Transverse colon (tissue), 4 donors: ENCODE measurements at regions of chr12 and their contacts with region 1.

Region 1: DNA sequence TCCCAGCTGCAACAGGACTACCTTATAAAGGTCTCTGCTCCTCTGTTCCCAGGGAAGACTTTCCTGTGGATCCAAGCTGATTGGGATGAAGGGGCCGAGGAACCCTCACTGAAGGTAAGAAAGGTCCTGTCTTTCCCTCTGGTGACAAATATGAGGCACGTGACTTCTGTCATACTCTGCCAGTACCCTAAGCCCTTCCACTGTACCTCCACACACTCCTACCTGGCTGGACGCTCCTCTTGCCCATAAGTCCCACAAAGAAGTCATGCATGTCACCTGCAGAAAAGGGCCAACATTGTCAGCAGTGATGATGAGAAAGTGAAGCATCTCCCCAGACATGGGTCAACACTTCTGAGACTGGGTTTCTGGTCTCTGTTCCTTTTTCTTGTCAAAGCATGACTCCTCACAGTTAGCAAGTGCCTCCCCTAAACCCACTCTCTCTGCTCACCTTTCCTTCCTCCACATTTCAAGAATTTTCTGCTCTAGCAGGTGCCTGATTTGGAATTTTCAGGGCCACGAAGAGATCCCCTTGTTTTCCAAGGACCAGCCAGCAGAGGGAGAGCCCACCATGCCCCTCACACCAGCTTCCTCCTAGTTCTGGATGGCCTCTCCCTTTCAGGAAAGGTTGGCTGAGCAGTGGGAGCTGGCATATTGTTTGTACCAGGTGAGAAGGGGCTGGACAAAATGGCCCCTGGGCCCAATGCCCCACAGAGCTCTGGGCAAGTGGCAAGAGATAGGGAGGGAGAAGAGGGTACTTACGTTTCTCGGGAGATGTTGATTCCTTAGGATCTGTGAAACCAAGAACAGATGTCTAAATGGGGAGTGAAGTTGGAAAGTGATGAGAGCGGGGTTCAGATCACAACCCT is 3.5 kb downstream of the TAC3 start:
- DNase-seq: no peak
- H3K4me3 ChIP-seq: no peak overlapping the region
- H3K27ac ChIP-seq: no peak overlapping the region
- H3K4me1 ChIP-seq: peaks cover 3 to 12% (median 7%) of the 10 kb centered on the region in 4 donors
- H3K27me3 ChIP-seq: no peaks in the 10 kb centered on the region
- CTCF ChIP-seq: no peak
- EP300 ChIP-seq: no peak
- POLR2A ChIP-seq: no peak

Region 2: GRCh38 chr12:57063991-57064685 is 51.3 kb after region 1 on chr12:
- in situ Hi-C with region 1: loop called in 2 of 4 experiments (anchors 10 kb)
- intact Hi-C with region 1: loop called (anchors 2 kb)
- DNase-seq: no peak
- H3K4me3 ChIP-seq: no peak overlapping the region
- H3K27ac ChIP-seq: peak overlapping the region in 2 of 4 donors; percentile 14 to 53
- H3K4me1 ChIP-seq: peaks cover 0 to 4% (median 0%) of the 10 kb centered on the region in 4 donors
- H3K27me3 ChIP-seq: no peaks in the 10 kb centered on the region
- CTCF ChIP-seq: no peak
- EP300 ChIP-seq: no peak
- POLR2A ChIP-seq: no peak

Region 3: DNA sequence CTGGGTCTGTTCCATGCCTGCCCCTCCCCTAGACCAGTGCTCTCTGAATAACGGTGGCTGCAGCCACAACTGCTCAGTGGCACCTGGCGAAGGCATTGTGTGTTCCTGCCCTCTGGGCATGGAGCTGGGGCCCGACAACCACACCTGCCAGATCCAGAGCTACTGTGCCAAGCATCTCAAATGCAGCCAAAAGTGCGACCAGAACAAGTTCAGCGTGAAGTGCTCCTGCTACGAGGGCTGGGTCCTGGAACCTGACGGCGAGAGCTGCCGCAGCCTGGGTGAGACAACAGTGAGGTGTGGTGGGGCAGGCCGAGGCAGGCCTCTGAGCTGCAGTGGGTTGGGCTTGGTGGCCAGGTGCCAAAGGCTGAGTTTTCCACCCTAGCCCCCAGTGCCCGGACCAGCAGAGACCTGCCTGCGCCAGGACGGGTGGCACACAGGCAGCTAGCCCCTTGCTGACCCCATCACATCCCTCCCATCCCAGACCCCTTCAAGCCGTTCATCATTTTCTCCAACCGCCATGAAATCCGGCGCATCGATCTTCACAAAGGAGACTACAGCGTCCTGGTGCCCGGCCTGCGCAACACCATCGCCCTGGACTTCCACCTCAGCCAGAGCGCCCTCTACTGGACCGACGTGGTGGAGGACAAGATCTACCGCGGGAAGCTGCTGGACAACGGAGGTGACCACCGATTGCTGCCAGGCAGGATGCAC is 162.8 kb after region 1 on chr12:
- in situ Hi-C with region 1: loop called in 1 of 4 experiments (anchors 10 kb)
- intact Hi-C with region 1: loop called (anchors 10 kb)
- DNase-seq: peak; percentile 86
- H3K4me3 ChIP-seq: no peak overlapping the region
- H3K27ac ChIP-seq: peak overlapping the region; percentile 0 to 62 (median 36)
- H3K4me1 ChIP-seq: peaks cover 0 to 7% (median 0%) of the 10 kb centered on the region in 4 donors
- H3K27me3 ChIP-seq: no peaks in the 10 kb centered on the region
- CTCF ChIP-seq: peak; percentile 72 to 88 (median 74)
- EP300 ChIP-seq: no peak
- POLR2A ChIP-seq: no peak